Right cardiac atrium (tissue), 5 donors: ENCODE measurements at regions of chr13 and their contacts with region 1.

Region 1: DNA sequence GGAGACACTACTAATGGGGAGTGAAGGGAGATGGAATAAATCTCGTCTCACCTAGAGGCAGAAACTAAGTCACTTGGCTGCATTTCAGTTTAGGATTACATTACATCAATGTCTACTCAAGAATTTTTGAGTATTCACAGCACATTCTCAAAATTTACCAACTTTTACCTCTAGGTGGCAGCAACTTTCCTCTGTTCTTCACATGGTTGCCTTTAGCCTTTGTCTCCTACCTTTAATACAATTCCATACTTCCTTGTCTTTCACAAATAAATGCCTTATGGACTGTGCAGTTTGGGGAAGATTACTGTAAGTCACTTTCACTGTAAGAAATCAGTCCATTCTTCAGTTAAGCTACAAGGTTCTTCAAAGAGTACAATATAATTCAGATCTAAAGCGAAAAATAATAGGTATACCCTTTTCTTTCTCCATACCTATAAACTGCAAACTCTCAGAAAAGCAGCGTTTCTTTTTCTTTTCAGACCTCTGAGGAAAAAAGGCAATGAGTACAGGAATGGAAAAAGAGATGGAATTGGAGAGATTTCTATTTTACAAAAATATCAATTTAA is 379.4 kb downstream of the KLF12 start:
- DNase-seq: no peak
- ATAC-seq: peak; percentile 51 to 54
- H3K4me3 ChIP-seq: no peak overlapping the region
- H3K27ac ChIP-seq: no peak overlapping the region
- H3K4me1 ChIP-seq: no peaks in the 10 kb centered on the region
- H3K27me3 ChIP-seq: no peaks in the 10 kb centered on the region

Region 2: GRCh38 chr13:73792796-73793195 is 38.0 kb after region 1 on chr13:
- intact Hi-C with region 1: no loop called
- DNase-seq: no peak
- ATAC-seq: no peak
- H3K4me3 ChIP-seq: no peak overlapping the region
- H3K27ac ChIP-seq: no peak overlapping the region
- H3K4me1 ChIP-seq: no peaks in the 10 kb centered on the region
- H3K27me3 ChIP-seq: no peaks in the 10 kb centered on the region

Region 3: DNA sequence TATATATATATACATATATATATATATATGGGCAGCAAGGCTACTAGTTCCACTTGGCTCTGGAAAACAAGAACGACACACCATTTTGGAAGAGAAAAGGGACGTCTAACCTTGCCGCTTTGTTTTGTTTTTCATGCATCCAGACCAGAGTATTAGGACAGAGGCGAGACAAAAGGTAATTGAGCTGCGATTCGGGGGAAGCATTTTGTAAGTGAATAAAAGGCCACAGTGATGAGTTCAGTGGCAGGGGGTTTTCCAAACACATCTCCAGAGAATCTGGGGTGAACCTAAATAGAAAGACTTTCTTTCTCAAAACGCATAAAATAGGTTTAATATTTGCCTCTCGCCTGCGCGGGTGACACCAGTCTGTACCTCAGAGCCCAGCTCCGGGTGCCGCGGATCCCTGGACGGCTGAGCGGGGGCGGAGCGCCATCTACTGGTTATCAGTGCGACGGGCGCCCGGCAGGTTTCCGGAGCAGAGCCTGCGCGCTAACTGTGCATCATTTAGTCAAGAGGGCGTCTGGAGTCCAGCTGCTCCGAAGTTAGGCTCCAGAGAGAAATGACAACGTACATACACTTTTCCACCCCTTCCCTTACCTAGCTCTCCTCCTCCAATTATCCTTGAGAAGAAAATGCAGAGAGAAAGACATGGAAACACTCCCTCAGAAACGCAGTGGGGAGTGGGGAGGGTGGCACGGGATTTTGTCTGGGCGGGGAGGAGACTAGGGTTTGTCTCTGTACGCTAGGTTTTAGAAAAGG is 1464.8 kb after region 1 on chr13:
- intact Hi-C with region 1: loop called in 1 of 4 experiments (anchors 10 kb)
- DNase-seq: peak; percentile 83 to 94 (median 94)
- ATAC-seq: peak; percentile 95 to 97
- H3K4me3 ChIP-seq: no peak overlapping the region
- H3K27ac ChIP-seq: no peak overlapping the region
- H3K4me1 ChIP-seq: no peaks in the 10 kb centered on the region
- H3K27me3 ChIP-seq: no peaks in the 10 kb centered on the region